ENCODE measurements at regions of chr12 and their contacts with region 1.

Region 1: GRCh38 chr12:122895705-122896636 is at the start of gene VPS37B:
- DNase-seq: no peak
- ATAC-seq: peak; percentile 38
- H3K4me3 ChIP-seq: peak within 1 kb of the TSS; percentile 69
- H3K27ac ChIP-seq: peak within 1 kb of the TSS; percentile 34
- H3K4me1 ChIP-seq: peaks cover 44% of the 10 kb centered on the region
- H3K27me3 ChIP-seq: no peaks in the 10 kb centered on the region
- CTCF ChIP-seq: no peak
- EP300 ChIP-seq: peak; percentile 45 to 57; a peak in 2 of 4 replicates
- POLR2A ChIP-seq: peak; percentile 93
- RAD21 ChIP-seq: no peak
- polyA plus RNA-seq, gene VPS37B: 0.66 to 1.7 TPM

Region 2: GRCh38 chr12:122871851-122872780 is 23.9 kb before region 1 on chr12:
- CTCF ChIA-PET with region 1: interaction called, 107 read pairs
- POLR2A ChIA-PET with region 1: interaction called, 23 read pairs
- RAD21 ChIA-PET with region 1: interaction called, 18 read pairs
- SMC1A ChIA-PET with region 1: interaction called, 64 read pairs
- in situ Hi-C with region 1: no loop called
- intact Hi-C with region 1: no loop called
- DNase-seq: peak; percentile 52
- ATAC-seq: peak; percentile 52
- H3K4me3 ChIP-seq: peak overlapping the region; percentile 57; the same call in 1 of the 2 replicates
- H3K27ac ChIP-seq: peak overlapping the region; percentile 64
- H3K4me1 ChIP-seq: peaks cover 45% of the 10 kb centered on the region
- H3K27me3 ChIP-seq: no peaks in the 10 kb centered on the region
- CTCF ChIP-seq: no peak
- EP300 ChIP-seq: no peak
- POLR2A ChIP-seq: 0 out of 2 replicates have a peak, but pooled peaks have one; percentile 17
- RAD21 ChIP-seq: no peak

Region 3: GRCh38 chr12:122880668-122881067 is 15.3 kb before region 1 on chr12:
- CTCF ChIA-PET with region 1: interaction called, 107 read pairs
- POLR2A ChIA-PET with region 1: interaction called, 25 read pairs
- RAD21 ChIA-PET with region 1: interaction called, 11 read pairs
- SMC1A ChIA-PET with region 1: interaction called, 31 read pairs
- in situ Hi-C with region 1: no loop called
- intact Hi-C with region 1: no loop called
- DNase-seq: no peak
- ATAC-seq: peak; percentile 60
- H3K4me3 ChIP-seq: no peak overlapping the region
- H3K27ac ChIP-seq: no peak overlapping the region
- H3K4me1 ChIP-seq: peaks cover 25% of the 10 kb centered on the region
- H3K27me3 ChIP-seq: no peaks in the 10 kb centered on the region; a peak in 1 of 4 replicates
- CTCF ChIP-seq: peak; percentile 43; a peak in 5 of 6 replicates
- EP300 ChIP-seq: no peak
- POLR2A ChIP-seq: no peak
- RAD21 ChIP-seq: peak; percentile 52

Region 4: GRCh38 chr12:122921917-122922316 is 25.9 kb after region 1 on chr12:
- CTCF ChIA-PET with region 1: interaction called, 3 read pairs
- POLR2A ChIA-PET with region 1: interaction called, 10 read pairs
- RAD21 ChIA-PET with region 1: interaction called, 9 read pairs
- SMC1A ChIA-PET with region 1: interaction called, 14 read pairs
- in situ Hi-C with region 1: no loop called
- intact Hi-C with region 1: no loop called
- DNase-seq: no peak
- ATAC-seq: no peak
- H3K4me3 ChIP-seq: no peak overlapping the region
- H3K27ac ChIP-seq: no peak overlapping the region
- H3K4me1 ChIP-seq: peaks cover 12% of the 10 kb centered on the region
- H3K27me3 ChIP-seq: no peaks in the 10 kb centered on the region
- CTCF ChIP-seq: no peak
- EP300 ChIP-seq: no peak
- POLR2A ChIP-seq: no peak
- RAD21 ChIP-seq: no peak

Region 5: DNA sequence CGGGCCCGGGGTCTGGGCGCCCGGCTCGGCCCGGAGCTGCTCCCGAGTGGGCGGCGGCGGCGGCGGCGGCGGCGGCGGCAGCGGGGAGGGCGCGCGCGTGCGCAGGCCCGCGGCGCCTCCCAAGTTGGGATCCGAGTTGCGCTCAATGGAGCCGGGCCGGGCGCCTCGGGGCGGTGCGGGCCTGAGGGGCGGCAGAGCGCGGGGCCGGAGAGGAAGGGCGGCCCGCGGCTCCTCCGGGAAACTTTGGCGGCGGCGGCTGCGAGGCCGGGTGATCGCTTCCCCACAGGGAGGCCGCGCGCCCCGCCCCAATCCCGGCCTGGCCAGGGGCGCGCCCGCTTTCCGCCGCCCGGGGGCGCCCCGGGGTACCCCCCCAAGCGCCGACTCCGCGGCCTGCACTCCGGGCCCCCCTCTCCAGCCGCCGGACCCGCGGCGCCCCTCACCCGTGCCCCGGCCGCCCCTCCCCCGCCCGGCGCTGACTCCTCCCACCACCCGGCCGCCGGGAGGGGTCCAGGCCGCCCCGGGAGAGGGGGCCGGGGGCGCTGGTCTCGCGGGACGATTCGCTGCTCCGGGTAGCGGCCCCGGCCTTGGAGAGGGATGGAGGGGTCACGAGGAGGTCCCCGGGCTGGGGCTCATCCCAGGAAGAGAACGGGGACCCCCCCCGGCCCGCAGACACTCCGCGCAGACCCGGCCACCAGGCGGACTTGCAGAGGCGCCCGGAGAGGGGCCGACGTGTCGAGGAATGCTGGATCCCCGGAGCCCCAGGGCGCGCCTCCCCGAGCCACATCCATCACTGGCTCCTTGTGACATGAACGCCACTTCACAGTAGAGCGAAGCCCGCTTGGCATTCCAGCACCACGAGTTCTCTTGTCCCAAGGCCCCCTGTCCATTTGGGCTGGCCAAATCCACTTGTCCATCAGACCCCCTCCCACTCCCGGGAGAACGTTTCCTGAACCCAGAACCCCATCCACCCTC is 638.0 kb after region 1 on chr12 and contains the start of gene RILPL1:
- CTCF ChIA-PET with region 1: no interaction called
- POLR2A ChIA-PET with region 1: no interaction called
- RAD21 ChIA-PET with region 1: no interaction called
- SMC1A ChIA-PET with region 1: no interaction called
- in situ Hi-C with region 1: no loop called
- intact Hi-C with region 1: no loop called
- DNase-seq: no peak
- ATAC-seq: peak; percentile 75
- H3K4me3 ChIP-seq: peak within 1 kb of the TSS; percentile 67
- H3K27ac ChIP-seq: no peak within 1 kb of the TSS
- H3K4me1 ChIP-seq: peaks cover 16% of the 10 kb centered on the region
- H3K27me3 ChIP-seq: no peaks in the 10 kb centered on the region; a peak in 2 of 4 replicates
- CTCF ChIP-seq: peak in 2 of 3 experiments; percentile 23 to 31; a peak in 2 of 6 replicates
- EP300 ChIP-seq: no peak
- POLR2A ChIP-seq: no peak
- RAD21 ChIP-seq: 0 out of 2 replicates have a peak, but pooled peaks have one; percentile 4
- polyA plus RNA-seq, gene RILPL1: 0.07 to 0.14 TPM

Measured in GM12878 (cell line).